ENCODE measurements at regions of chr9 and their contacts with region 1.

Region 1: DNA sequence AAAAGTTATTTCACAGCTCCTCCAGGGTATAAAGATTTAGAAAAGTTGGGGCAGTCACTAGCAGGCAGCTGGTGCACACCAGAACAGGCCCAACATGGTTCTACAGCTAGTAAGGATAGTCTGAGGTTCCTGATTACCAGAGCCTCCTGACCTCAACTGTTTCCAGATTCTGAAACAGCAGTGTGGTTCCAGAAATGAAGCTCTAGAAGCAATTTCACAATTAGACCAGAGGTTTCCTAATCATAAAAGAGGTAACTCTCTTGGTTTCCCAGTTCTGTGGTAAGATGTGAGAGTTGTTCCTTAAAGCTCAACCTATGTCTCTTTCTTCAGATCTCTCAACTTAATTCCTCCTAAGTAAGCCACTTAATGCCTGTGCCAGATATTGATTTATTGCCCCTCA is 11.9 kb downstream of the AGTPBP1 start:
- DNase-seq: no peak
- ATAC-seq: peak; percentile 45

Region 2: DNA sequence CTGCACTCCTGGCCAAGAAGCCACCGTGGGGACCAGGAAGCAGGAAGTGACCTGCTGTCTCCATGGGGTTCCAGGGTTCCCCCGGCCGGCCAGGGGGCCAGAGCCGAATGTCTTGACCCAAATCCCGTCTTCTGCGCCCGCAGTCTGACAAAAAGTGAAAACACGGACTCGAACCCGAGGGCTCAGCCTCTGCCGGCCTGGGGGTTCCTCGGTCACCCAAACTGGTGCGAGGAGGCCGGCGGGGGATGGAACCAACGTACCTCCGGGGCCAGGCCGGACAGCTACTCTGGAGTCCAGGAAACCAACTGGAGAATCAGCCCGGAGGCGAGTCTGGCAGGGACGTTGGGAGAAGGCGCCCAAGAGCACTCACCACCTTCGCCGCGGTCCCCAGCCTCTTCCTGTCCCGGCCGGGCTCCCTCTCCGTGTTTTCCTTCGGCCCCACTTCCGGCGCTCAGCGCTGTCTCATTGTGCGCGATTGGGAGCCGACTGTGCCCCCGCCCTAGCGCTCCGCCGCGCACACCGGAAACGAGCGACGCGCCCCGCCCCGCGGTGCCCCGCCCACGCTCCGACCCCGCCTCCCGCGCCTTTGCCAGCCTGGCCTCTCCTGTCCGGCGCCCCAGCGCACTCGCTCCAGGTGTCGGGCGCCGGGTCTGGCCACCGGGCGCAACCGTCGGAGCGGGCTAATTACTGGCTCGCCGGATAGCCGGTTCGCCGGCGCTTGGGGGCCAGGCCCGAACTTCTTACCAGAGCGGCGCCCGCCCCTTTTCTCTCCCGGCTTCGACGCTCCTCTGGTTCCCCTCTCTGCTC is 624.3 kb after region 1 on chr9 and contains the start of gene TUT7:
- intact Hi-C with region 1: loop called (anchors 10 kb)
- DNase-seq: peak; percentile 98
- ATAC-seq: peak; percentile 98
- total RNA-seq, gene TUT7: 15.9 TPM

Measured in left ventricle myocardium superior (tissue), 1 donor.